ENCODE measurements at regions of chr6 and their contacts with region 1.

Region 1: GRCh38 chr6:157800420-157801237 is 22.4 kb upstream of the SNX9 start:
- DNase-seq: peak; percentile 78
- ATAC-seq: peak; percentile 84
- H3K4me3 Mint-ChIP-seq: peak overlapping the region; percentile 26
- H3K27ac Mint-ChIP-seq: peak overlapping the region; percentile 83
- H3K4me1 Mint-ChIP-seq: peaks cover 68% of the 10 kb centered on the region
- H3K27me3 Mint-ChIP-seq: no peaks in the 10 kb centered on the region
- CTCF ChIP-seq: no peak

Region 2: GRCh38 chr6:157770946-157771345 is 29.7 kb before region 1 on chr6:
- CTCF ChIA-PET with region 1: interaction called, 26 read pairs
- POLR2A ChIA-PET with region 1: interaction called, 13 read pairs
- intact Hi-C with region 1: no loop called
- DNase-seq: no peak
- ATAC-seq: peak; percentile 18
- H3K4me3 Mint-ChIP-seq: no peak overlapping the region
- H3K27ac Mint-ChIP-seq: no peak overlapping the region
- H3K4me1 Mint-ChIP-seq: peaks cover 56% of the 10 kb centered on the region
- H3K27me3 Mint-ChIP-seq: peaks cover 2% of the 10 kb centered on the region
- CTCF ChIP-seq: no peak

Region 3: DNA sequence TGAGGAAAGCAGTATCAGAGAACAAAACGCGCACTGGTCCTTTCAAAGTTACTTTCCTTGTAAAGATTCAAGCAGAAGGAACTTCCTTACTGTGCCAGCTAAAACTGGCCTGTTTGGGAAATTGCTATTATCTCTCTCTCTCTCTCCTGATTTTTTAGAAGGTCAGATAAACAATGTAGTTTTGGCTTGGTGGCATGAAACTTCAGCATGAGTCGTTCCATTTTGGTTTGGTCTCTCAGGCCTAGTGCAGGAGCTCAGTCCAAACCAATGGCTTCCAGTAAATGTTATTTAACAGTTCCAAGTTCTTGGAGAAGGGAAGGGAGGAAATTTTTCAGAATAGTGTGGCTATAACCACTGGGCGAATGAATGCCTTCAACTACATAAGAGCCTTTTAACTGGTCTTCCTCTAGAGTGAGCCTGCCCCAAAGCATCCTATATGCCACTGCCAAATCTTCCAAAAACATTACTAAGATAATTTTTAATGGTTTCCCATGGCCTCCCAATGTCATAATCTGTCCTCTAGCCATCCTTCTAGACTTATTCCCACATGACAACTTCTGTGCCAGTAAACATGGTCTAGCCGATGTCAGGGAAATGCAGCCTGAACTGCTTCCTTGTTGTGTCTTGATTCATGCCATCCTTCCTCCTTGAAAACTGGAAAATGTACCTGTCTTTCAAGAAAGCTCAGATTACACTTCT is 13.3 kb after region 1 on chr6:
- CTCF ChIA-PET with region 1: interaction called, 3 read pairs
- POLR2A ChIA-PET with region 1: interaction called, 12 read pairs
- intact Hi-C with region 1: no loop called
- DNase-seq: no peak
- ATAC-seq: no peak
- H3K4me3 Mint-ChIP-seq: no peak overlapping the region
- H3K27ac Mint-ChIP-seq: no peak overlapping the region
- H3K4me1 Mint-ChIP-seq: peaks cover 39% of the 10 kb centered on the region
- H3K27me3 Mint-ChIP-seq: peaks cover 2% of the 10 kb centered on the region
- CTCF ChIP-seq: no peak

Region 4: GRCh38 chr6:157845493-157846259 is 45.0 kb after region 1 on chr6:
- CTCF ChIA-PET with region 1: interaction called, 3 read pairs
- POLR2A ChIA-PET with region 1: interaction called, 12 read pairs
- intact Hi-C with region 1: no loop called
- DNase-seq: no peak
- ATAC-seq: peak; percentile 58
- H3K4me3 Mint-ChIP-seq: no peak overlapping the region
- H3K27ac Mint-ChIP-seq: peak overlapping the region; percentile 40
- H3K4me1 Mint-ChIP-seq: peaks cover 86% of the 10 kb centered on the region
- H3K27me3 Mint-ChIP-seq: no peaks in the 10 kb centered on the region
- CTCF ChIP-seq: no peak

Region 5: GRCh38 chr6:157861814-157862213 is 61.2 kb after region 1 on chr6:
- CTCF ChIA-PET with region 1: no interaction called
- POLR2A ChIA-PET with region 1: no interaction called
- intact Hi-C with region 1: loop called (anchors 2 kb)
- DNase-seq: no peak
- ATAC-seq: no peak
- H3K4me3 Mint-ChIP-seq: no peak overlapping the region
- H3K27ac Mint-ChIP-seq: no peak overlapping the region
- H3K4me1 Mint-ChIP-seq: peaks cover 74% of the 10 kb centered on the region
- H3K27me3 Mint-ChIP-seq: no peaks in the 10 kb centered on the region
- CTCF ChIP-seq: no peak

Measured in activated CD8-positive, alpha-beta T cell treated with anti-CD3 and anti-CD28 coated beads for 36 hours (primary cell).